ENCODE measurements at regions of chrX and their contacts with region 1.

Region 1: GRCh38 chrX:43939187-43939926 is 33.8 kb downstream of the NDP start:
- DNase-seq: no peak
- H3K4me3 ChIP-seq: no peak overlapping the region
- CTCF ChIP-seq: no peak
- POLR2A ChIP-seq: no peak

Region 2: GRCh38 chrX:41952102-41952501 is 1987.3 kb before region 1 on chrX:
- intact Hi-C with region 1: loop called (anchors 5 kb)
- DNase-seq: no peak
- H3K4me3 ChIP-seq: no peak overlapping the region
- CTCF ChIP-seq: no peak
- POLR2A ChIP-seq: no peak

Region 3: DNA sequence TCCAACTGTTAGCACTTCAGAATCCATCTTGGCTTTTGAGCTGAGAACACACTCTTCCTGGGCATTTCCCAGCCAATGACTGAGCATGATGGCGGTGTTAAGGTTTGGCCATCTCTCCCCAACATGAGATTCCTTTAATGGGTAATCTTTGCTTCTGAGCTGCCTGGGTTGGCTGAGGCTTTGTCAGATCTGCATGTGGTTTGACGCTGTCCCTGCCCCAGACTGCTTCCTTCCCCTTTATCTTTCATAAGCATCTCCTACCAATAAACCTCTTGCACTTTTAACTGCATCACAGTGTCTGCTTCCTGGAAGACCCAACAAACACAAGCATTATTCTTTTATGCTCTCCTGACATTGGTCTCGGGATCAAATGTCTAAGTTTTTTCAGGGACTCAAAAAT is 1292.8 kb after region 1 on chrX:
- intact Hi-C with region 1: no loop called
- DNase-seq: no peak
- H3K4me3 ChIP-seq: no peak overlapping the region
- CTCF ChIP-seq: no peak
- POLR2A ChIP-seq: no peak

Measured in lower leg skin (tissue), 4 donors.